ENCODE measurements at regions of chr1 and their contacts with region 1.

Region 1: DNA sequence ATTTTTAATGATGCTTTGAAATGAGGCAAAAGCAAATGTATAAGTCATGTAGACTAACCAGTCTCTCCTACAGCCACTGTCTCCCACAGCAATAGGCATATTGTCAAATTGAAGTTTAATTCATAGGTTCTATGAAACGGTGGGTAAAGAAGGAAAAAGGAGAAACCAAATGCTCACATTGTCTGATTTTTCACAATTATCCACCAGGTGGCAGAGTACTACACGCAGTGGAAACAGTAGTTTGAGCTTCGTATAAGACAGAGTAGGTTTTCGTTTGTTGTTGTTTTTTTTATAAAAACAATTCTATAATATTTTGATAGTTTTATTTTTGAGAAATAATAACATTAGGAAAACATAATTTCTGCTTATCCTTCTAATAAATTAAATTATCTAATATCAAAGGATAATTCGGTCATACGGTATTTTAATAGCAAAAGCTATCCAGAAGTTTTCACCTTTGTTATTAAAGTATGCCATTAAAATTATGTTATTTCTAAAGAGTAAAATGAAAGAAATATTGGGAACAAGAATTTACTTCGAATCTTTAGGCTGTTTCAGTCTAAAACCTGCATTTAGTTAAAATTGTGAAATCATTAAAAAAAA is 39.1 kb downstream of the TYW3 start:
- DNase-seq: no peak
- H3K4me3 ChIP-seq: no peak overlapping the region
- H3K27ac ChIP-seq: no peak overlapping the region
- H3K4me1 ChIP-seq: peaks cover 0 to 7% (median 0%) of the 10 kb centered on the region in 6 donors
- H3K27me3 ChIP-seq: peaks cover 0 to 8% (median 0%) of the 10 kb centered on the region in 7 donors
- CTCF ChIP-seq: peak in 10 of 11 experiments; percentile 31 to 69 (median 52)
- POLR2A ChIP-seq: no peak

Region 2: DNA sequence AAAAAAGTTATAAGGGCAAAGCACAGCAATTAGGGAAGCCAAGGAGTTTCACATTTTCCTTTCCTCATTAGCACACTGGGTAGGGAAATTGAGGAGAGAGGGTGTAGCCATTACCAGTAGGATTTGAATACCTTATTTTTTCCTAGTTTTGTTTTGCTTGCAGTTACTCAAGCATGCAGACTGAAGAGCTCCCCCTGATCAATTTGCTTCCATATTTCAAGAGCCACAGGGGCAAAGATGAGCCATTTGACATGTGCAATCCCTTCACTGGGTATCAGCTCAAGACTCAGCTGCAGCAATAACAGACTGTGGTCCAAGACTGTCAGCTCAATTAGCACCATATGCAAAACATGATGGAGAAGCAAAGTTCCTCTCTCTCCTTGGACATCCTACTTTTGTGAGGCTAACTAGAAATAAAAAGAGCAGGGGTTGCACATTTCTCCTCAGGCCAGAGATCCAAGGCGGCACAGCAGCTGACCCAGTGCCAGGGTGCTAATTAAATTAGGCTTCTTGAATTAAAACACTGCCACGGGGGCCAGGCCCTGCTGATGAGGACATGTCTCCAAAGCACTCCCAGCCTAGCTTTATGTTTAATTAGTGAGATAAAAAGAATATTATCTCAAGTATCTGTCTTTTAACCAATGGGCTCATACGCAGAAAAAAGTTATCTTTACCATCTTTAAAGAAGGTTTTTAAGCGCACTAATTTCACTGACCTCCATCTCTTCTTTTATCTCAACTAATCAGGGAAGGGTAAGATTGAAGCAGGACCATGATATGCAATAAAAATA is 222.9 kb before region 1 on chr1:
- intact Hi-C with region 1: no loop called
- DNase-seq: no peak
- H3K4me3 ChIP-seq: no peak overlapping the region
- H3K27ac ChIP-seq: no peak overlapping the region
- H3K4me1 ChIP-seq: no peaks in the 10 kb centered on the region
- H3K27me3 ChIP-seq: no peaks in the 10 kb centered on the region
- CTCF ChIP-seq: no peak
- POLR2A ChIP-seq: no peak

Region 3: GRCh38 chr1:75203415-75204277 is 431.6 kb after region 1 on chr1:
- intact Hi-C with region 1: loop called (anchors 5 kb)
- DNase-seq: no peak
- H3K4me3 ChIP-seq: no peak overlapping the region
- H3K27ac ChIP-seq: no peak overlapping the region
- H3K4me1 ChIP-seq: no peaks in the 10 kb centered on the region
- H3K27me3 ChIP-seq: peaks cover 0 to 3% (median 0%) of the 10 kb centered on the region in 7 donors
- CTCF ChIP-seq: peak in 8 of 11 experiments; percentile 23 to 61 (median 42)
- POLR2A ChIP-seq: no peak

Measured in spleen (tissue), 13 donors.